Endothelial cell of umbilical vein (primary cell): ENCODE measurements at regions of chr6 and their contacts with region 1.

Region 1: GRCh38 chr6:166556871-166557322 is 29.6 kb downstream of the RAMACL start:
- DNase-seq: peak; percentile 100
- H3K4me3 ChIP-seq: no peak overlapping the region
- H3K27ac ChIP-seq: peak overlapping the region; percentile 92
- H3K4me1 ChIP-seq: peaks cover 27% of the 10 kb centered on the region
- H3K27me3 ChIP-seq: no peaks in the 10 kb centered on the region
- CTCF ChIP-seq: no peak
- POLR2A ChIP-seq: no peak

Region 2: DNA sequence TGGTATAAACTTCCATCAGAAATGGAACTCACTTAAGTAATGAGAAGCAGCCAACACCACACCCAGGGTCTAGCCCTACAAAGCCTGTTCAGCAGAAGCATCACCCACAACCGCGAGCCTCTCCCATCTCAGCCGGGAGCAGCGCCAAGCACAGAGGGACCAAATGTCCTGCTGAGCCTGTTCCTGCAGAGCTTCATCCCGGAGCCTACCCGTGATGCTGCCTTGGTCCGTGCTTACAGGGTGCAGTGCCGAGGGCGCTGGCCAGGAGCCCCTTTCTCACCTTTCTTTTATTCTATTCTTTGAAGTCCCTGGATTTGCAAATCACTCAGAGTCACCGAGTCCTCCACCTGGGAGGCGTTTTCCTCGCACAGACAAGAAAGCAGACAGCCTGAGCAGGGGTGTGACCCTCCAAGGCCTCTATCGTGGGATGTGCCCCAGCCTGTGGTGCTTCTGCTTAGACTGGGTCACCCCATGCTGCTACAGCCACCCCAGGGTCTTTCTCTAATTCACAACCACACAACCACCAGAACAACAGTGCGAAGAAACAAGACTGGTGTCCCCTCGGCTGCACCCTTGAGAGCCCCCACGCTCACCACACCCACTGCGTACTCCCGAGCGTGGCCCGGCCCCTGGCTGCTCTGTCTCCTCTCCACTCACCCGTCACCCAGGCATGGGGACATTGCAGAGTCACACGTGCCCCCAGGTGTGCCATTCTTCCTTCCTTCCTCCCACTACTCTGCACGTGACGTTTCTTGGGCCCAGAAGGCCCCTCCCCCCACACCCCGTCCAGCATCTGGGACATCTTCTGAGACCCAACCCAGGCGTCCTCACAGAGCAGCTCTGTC is 82.0 kb before region 1 on chr6:
- CTCF ChIA-PET with region 1: no interaction called
- POLR2A ChIA-PET with region 1: no interaction called
- dilution Hi-C with region 1: no loop called
- intact Hi-C with region 1: no loop called
- DNase-seq: no peak
- H3K4me3 ChIP-seq: no peak overlapping the region
- H3K27ac ChIP-seq: no peak overlapping the region
- H3K4me1 ChIP-seq: no peaks in the 10 kb centered on the region
- H3K27me3 ChIP-seq: no peaks in the 10 kb centered on the region
- CTCF ChIP-seq: no peak
- POLR2A ChIP-seq: no peak

Region 3: GRCh38 chr6:166515072-166515810 is 41.7 kb before region 1 on chr6:
- CTCF ChIA-PET with region 1: no interaction called
- POLR2A ChIA-PET with region 1: no interaction called
- dilution Hi-C with region 1: no loop called
- intact Hi-C with region 1: loop called (anchors 2 kb)
- DNase-seq: peak; percentile 56
- H3K4me3 ChIP-seq: no peak overlapping the region
- H3K27ac ChIP-seq: no peak overlapping the region
- H3K4me1 ChIP-seq: peaks cover 6% of the 10 kb centered on the region
- H3K27me3 ChIP-seq: no peaks in the 10 kb centered on the region
- CTCF ChIP-seq: peak; percentile 23 to 32
- POLR2A ChIP-seq: no peak

Region 4: DNA sequence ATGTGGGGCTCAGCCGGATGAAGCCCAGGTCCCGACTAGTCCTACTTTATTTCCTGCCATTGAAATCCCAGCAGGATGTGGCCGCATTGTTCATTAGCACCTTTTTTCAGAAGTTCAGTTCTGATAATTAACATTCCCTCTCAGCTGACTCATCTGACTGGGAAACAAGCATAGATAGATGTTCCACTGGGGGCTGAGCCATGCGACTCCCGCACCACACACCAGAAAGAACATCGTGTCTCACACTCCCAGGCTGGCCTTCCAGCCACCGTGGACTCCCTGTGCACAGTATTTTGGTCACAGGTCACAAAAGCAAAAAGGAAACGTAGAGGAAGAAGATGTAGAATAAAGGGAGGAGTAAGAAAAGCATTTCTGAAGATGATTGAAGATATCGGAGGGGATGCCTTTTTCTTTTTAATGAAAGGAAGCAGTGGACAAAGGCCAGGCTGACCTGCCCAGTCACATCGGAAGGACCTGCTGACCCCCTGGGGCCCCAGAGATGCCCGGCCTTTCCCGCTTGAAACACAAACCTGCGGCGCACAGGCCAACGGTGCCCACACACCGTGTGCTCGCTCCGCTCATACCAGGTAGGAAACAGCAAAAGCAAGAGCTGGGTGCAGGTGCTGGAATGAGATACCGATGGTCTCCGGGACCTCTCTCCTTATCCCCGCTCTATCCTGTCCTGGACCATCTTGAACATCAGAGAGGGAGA is 58.3 kb after region 1 on chr6:
- CTCF ChIA-PET with region 1: no interaction called
- POLR2A ChIA-PET with region 1: no interaction called
- dilution Hi-C with region 1: no loop called
- intact Hi-C with region 1: loop called (anchors 1 kb)
- DNase-seq: peak; percentile 86
- H3K4me3 ChIP-seq: no peak overlapping the region
- H3K27ac ChIP-seq: peak overlapping the region; percentile 58
- H3K4me1 ChIP-seq: peaks cover 40% of the 10 kb centered on the region
- H3K27me3 ChIP-seq: no peaks in the 10 kb centered on the region
- CTCF ChIP-seq: no peak
- POLR2A ChIP-seq: no peak

Region 5: DNA sequence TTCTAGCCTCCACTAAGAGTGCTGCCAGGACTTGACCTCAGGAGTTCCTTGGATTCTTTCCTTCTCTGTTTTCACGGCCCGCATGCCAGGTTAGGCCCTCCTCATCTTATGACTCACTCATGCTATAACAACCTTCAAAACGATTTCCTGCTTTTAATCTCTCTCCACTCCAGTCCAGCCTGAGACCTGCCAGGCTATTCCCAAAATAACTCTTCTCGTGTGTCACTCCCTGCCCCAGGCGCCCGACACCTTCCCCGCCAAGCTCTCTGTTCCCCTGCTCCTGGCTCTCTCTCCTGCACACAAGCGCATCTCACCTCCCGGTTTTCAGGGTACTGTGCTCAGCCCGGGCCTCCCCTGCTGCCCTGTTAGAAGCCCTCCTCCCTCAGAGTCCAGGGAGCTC is 134.3 kb after region 1 on chr6:
- CTCF ChIA-PET with region 1: no interaction called
- POLR2A ChIA-PET with region 1: no interaction called
- dilution Hi-C with region 1: no loop called
- intact Hi-C with region 1: loop called (anchors 2 kb)
- DNase-seq: peak; percentile 88
- H3K4me3 ChIP-seq: no peak overlapping the region
- H3K27ac ChIP-seq: peak overlapping the region; percentile 68
- H3K4me1 ChIP-seq: peaks cover 20% of the 10 kb centered on the region
- H3K27me3 ChIP-seq: no peaks in the 10 kb centered on the region
- CTCF ChIP-seq: no peak
- POLR2A ChIP-seq: no peak